H1 (cell line): ENCODE measurements at regions of chrX and their contacts with region 1.

Region 1: DNA sequence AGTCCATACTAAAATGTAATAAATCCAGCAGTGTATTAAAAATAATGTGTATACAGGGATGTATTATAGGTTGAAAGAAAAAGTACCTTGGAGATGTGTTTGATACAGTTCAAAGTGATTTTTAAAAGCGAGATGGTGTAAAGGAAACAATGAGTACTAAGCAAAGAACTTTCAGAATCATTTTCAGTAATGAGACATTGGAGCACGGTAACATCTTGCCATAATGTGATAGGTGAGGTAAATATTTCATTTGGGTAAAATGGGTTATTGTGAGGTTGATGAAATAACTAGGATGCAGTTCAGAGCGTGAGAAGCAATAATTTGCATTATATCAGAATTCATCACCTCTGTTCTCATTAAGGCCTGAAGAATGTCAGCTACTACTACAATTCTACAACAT is 25.9 kb downstream of the EIF2S3 start:
- DNase-seq: no peak
- H3K4me3 ChIP-seq: no peak overlapping the region
- H3K27ac ChIP-seq: no peak overlapping the region
- H3K4me1 ChIP-seq: no peaks in the 10 kb centered on the region
- H3K27me3 ChIP-seq: no peaks in the 10 kb centered on the region
- CTCF ChIP-seq: no peak
- EP300 ChIP-seq: no peak
- POLR2A ChIP-seq: no peak
- RAD21 ChIP-seq: no peak

Region 2: DNA sequence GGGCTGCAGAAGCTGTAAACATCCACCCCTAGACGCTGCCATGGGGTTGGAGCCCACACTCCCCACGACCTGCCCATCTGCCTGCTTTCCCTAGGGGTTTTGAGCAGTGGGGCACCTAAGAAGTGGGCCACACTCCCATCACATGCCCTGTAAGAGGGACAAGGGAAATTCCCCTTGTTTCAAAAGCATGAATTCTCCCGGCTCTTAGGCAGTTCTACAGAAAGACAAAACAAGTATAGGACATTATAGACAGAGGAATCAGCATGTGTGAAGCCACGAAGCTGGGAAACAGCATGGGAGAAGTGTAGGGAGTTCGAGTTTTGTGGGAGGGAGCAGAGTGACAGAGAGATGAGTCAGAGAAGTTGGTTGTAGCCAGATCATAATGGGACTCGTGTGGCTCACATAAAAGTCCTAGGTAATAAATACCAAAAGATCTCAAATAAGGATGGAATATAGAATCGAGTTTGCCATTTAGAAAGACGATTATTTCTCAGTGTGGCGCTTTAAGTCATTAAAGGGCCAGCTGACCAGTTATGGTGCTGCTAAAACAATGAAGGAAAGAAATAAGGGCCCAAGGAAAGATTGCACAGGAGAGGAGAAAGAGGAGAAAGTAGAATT is 196.9 kb before region 1 on chrX:
- CTCF ChIA-PET with region 1: no interaction called
- POLR2A ChIA-PET with region 1: no interaction called
- DNase-seq: no peak
- H3K4me3 ChIP-seq: peak overlapping the region in 1 of 4 experiments; percentile 26; a peak in 1 of 8 replicates
- H3K27ac ChIP-seq: no peak overlapping the region
- H3K4me1 ChIP-seq: peaks cover 0 to 3% (median 0%) of the 10 kb centered on the region in 4 experiments; a peak in 2 of 7 replicates
- H3K27me3 ChIP-seq: no peaks in the 10 kb centered on the region
- CTCF ChIP-seq: no peak
- EP300 ChIP-seq: no peak
- POLR2A ChIP-seq: no peak
- RAD21 ChIP-seq: no peak

Region 3: GRCh38 chrX:24063488-24063887 is 17.2 kb before region 1 on chrX:
- CTCF ChIA-PET with region 1: no interaction called
- POLR2A ChIA-PET with region 1: interaction called, 160 read pairs
- DNase-seq: no peak
- H3K4me3 ChIP-seq: no peak overlapping the region
- H3K27ac ChIP-seq: no peak overlapping the region
- H3K4me1 ChIP-seq: no peaks in the 10 kb centered on the region
- H3K27me3 ChIP-seq: no peaks in the 10 kb centered on the region
- CTCF ChIP-seq: no peak
- EP300 ChIP-seq: no peak
- POLR2A ChIP-seq: peak; percentile 40 to 59; a peak in 2 of 3 replicates
- RAD21 ChIP-seq: no peak

Region 4: GRCh38 chrX:24110069-24110468 is 29.4 kb after region 1 on chrX:
- CTCF ChIA-PET with region 1: no interaction called
- POLR2A ChIA-PET with region 1: no interaction called
- DNase-seq: no peak
- H3K4me3 ChIP-seq: no peak overlapping the region
- H3K27ac ChIP-seq: no peak overlapping the region
- H3K4me1 ChIP-seq: no peaks in the 10 kb centered on the region
- H3K27me3 ChIP-seq: no peaks in the 10 kb centered on the region
- CTCF ChIP-seq: no peak
- EP300 ChIP-seq: no peak
- POLR2A ChIP-seq: no peak
- RAD21 ChIP-seq: no peak